ENCODE measurements at regions of chr17 and their contacts with region 1.

Region 1: DNA sequence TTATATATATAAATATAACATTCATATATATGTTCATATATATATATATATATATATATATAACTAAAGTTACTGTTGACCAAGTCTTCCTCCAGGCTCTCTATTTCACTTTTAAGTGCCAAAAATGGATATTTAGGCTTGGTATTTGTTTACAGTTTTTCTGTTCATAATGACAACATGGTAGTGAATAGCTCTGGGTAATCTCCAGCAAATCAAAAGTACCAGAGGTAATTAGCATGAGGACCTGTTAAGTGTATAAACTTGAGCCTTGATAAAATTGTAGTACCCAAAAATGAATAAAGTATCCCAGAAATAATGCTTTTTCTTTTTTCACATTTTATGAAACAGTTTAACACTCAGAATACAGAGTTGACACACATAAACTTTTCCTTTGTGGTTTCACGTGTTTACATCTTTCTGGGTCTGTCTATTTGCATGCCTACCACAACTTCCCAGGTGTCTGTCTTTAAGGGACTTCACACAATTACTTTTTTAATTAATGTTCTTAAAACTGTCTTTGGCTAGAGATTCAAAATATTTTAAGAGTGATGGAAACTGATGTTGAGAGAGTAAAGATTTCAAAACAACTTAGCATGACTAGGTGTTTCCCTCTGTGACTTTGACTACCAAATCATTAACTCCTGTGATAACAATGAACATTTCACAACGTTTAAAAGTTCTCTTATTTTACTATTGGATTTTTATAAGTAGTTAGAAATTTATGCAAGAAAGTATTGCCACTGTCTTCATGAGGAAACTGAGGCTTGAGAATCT is 47.9 kb downstream of the RABEP1 start:
- DNase-seq: peak; percentile 64
- ATAC-seq: peak; percentile 68
- H3K4me3 ChIP-seq: peak overlapping the region in 2 of 5 experiments; percentile 11 to 34
- H3K4me3 Mint-ChIP-seq: peak overlapping the region; percentile 71
- H3K27ac ChIP-seq: peak overlapping the region; percentile 46 to 74
- H3K27ac Mint-ChIP-seq: peak overlapping the region; percentile 87
- H3K4me1 ChIP-seq: peaks cover 21 to 28% of the 10 kb centered on the region in 2 donors
- H3K4me1 Mint-ChIP-seq: peaks cover 53% of the 10 kb centered on the region
- H3K27me3 ChIP-seq: no peaks in the 10 kb centered on the region
- H3K27me3 Mint-ChIP-seq: no peaks in the 10 kb centered on the region
- CTCF ChIP-seq: no peak

Region 2: GRCh38 chr17:5297245-5297644 is 32.7 kb before region 1 on chr17:
- CTCF ChIA-PET with region 1: interaction called, 3 read pairs
- POLR2A ChIA-PET with region 1: no interaction called
- intact Hi-C with region 1: loop called (anchors 5 kb)
- DNase-seq: peak; percentile 26
- ATAC-seq: no peak
- H3K4me3 ChIP-seq: no peak overlapping the region
- H3K4me3 Mint-ChIP-seq: no peak overlapping the region
- H3K27ac ChIP-seq: peak overlapping the region in 1 of 2 donors; percentile 12
- H3K27ac Mint-ChIP-seq: peak overlapping the region; percentile 73
- H3K4me1 ChIP-seq: peaks cover 7 to 16% of the 10 kb centered on the region in 2 donors
- H3K4me1 Mint-ChIP-seq: peaks cover 55% of the 10 kb centered on the region
- H3K27me3 ChIP-seq: no peaks in the 10 kb centered on the region
- H3K27me3 Mint-ChIP-seq: no peaks in the 10 kb centered on the region
- CTCF ChIP-seq: no peak

Region 3: DNA sequence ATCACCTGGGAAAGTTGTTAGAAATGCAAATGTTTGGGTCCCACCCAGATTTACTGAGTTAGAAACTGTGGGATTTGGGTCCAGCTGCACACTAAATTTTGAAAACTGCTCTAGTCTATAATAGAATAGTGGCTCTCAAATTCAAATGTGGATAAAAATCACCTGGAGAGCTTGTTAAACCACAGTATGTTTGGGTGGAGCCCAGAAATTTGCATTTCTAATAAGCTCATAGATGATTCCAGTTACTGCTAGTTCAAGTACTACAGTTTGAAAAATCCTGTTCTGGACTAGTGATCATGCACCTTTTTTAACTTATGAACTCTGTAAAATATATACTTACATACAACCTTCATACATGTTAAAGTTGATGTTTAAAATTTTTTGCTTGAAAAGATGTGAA is 20.1 kb before region 1 on chr17:
- CTCF ChIA-PET with region 1: interaction called, 5 read pairs
- POLR2A ChIA-PET with region 1: interaction called, 5 read pairs
- intact Hi-C with region 1: loop called (anchors 2 kb)
- DNase-seq: peak; percentile 26
- ATAC-seq: no peak
- H3K4me3 ChIP-seq: no peak overlapping the region
- H3K4me3 Mint-ChIP-seq: peak overlapping the region; percentile 45
- H3K27ac ChIP-seq: peak overlapping the region in 1 of 2 donors; percentile 60
- H3K27ac Mint-ChIP-seq: peak overlapping the region; percentile 50
- H3K4me1 ChIP-seq: peaks cover 31 to 32% of the 10 kb centered on the region in 2 donors
- H3K4me1 Mint-ChIP-seq: peaks cover 51% of the 10 kb centered on the region
- H3K27me3 ChIP-seq: no peaks in the 10 kb centered on the region
- H3K27me3 Mint-ChIP-seq: no peaks in the 10 kb centered on the region
- CTCF ChIP-seq: no peak